Caki2 (cell line): ENCODE measurements at regions of chr1 and their contacts with region 1.

Region 1: DNA sequence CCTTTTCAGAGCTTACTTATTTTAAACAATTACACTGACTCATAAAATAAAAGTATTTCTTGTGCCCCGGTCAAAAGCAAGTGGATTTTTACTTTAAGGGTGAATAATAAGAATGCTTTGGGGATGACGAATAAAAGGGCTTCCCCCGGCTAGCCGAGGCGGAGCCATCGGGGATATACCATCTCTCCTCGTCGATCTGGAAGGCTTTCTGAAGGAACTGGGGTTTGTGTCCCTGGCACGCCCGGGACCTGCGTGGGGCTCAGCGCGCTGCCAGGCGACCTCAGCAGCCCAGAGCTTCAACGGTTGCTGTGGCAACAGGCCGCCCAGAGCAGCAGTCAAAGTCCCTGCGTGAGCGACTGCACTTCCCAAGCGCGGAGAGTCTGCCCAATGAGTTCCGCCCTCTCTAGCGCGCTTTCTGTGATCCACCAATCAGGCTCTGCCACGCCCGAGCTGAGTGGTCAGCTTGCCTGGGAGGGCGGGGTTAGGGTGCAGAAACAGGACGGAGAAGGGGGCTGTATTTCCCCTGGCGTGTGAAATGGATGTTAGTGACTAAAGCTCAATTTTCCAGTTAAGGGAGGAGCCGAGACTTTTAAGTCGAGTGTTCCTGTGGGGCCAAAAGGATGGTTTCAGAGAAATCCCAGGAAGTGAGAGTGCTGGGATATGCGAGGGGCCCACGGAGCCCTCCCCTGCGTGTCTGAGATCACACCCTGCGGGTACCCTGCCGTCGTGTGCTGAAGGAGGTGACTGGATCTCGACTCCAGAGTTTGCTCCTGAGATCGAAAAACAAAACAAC is 33.0 kb upstream of the MGST3 start:
- DNase-seq: peak; percentile 96

Region 2: GRCh38 chr1:165392634-165393571 is 205.2 kb before region 1 on chr1:
- in situ Hi-C with region 1: loop called (anchors 25 kb)
- DNase-seq: peak; percentile 78

Region 3: GRCh38 chr1:165496501-165496900 is 101.6 kb before region 1 on chr1:
- in situ Hi-C with region 1: no loop called
- DNase-seq: no peak